ENCODE measurements at regions of chr1 and their contacts with region 1.

Region 1: GRCh38 chr1:84152649-84153056 is 8.6 kb downstream of the PRKACB start:
- DNase-seq: peak; percentile 37
- ATAC-seq: peak; percentile 70
- H3K4me3 Mint-ChIP-seq: peak overlapping the region; percentile 36
- H3K27ac Mint-ChIP-seq: peak overlapping the region; percentile 81
- H3K4me1 Mint-ChIP-seq: peaks cover 83% of the 10 kb centered on the region
- H3K27me3 Mint-ChIP-seq: no peaks in the 10 kb centered on the region
- CTCF ChIP-seq: no peak

Region 2: GRCh38 chr1:84164567-84165021 is 11.9 kb after region 1 on chr1:
- CTCF ChIA-PET with region 1: interaction called, 19 read pairs
- POLR2A ChIA-PET with region 1: interaction called, 11 read pairs
- intact Hi-C with region 1: no loop called
- DNase-seq: no peak
- ATAC-seq: peak; percentile 48
- H3K4me3 Mint-ChIP-seq: peak overlapping the region; percentile 68
- H3K27ac Mint-ChIP-seq: peak overlapping the region; percentile 58
- H3K4me1 Mint-ChIP-seq: peaks cover 80% of the 10 kb centered on the region
- H3K27me3 Mint-ChIP-seq: no peaks in the 10 kb centered on the region
- CTCF ChIP-seq: no peak

Region 3: GRCh38 chr1:84298328-84298683 is 145.7 kb after region 1 on chr1:
- CTCF ChIA-PET with region 1: interaction called, 5 read pairs
- POLR2A ChIA-PET with region 1: interaction called, 4 read pairs
- intact Hi-C with region 1: loop called (anchors 2 kb)
- DNase-seq: peak; percentile 54
- ATAC-seq: peak; percentile 77
- H3K4me3 Mint-ChIP-seq: peak overlapping the region; percentile 79
- H3K27ac Mint-ChIP-seq: peak overlapping the region; percentile 79
- H3K4me1 Mint-ChIP-seq: peaks cover 33% of the 10 kb centered on the region
- H3K27me3 Mint-ChIP-seq: peaks cover 5% of the 10 kb centered on the region
- CTCF ChIP-seq: no peak